Activated CD4-positive, alpha-beta T cell treated with anti-CD3 and anti-CD28 coated beads for 36 hours (primary cell): ENCODE measurements at regions of chr1 and their contacts with region 1.

Region 1: GRCh38 chr1:84996846-84997666 is at the start of gene MCOLN2:
- DNase-seq: peak; percentile 75
- ATAC-seq: peak; percentile 54
- H3K4me3 Mint-ChIP-seq: peak within 1 kb of the TSS; percentile 80
- H3K27ac Mint-ChIP-seq: peak within 1 kb of the TSS; percentile 81
- H3K4me1 Mint-ChIP-seq: peaks cover 45% of the 10 kb centered on the region
- H3K27me3 Mint-ChIP-seq: peaks cover 22% of the 10 kb centered on the region
- total RNA-seq, gene MCOLN2: 32.9 to 43.5 TPM

Region 2: GRCh38 chr1:84959294-84959693 is 37.8 kb before region 1 on chr1:
- CTCF ChIA-PET with region 1: interaction called, 7 read pairs
- POLR2A ChIA-PET with region 1: interaction called, 34 read pairs
- intact Hi-C with region 1: loop called (anchors 1 kb)
- DNase-seq: peak; percentile 77
- ATAC-seq: peak; percentile 97
- H3K4me3 Mint-ChIP-seq: peak overlapping the region; percentile 7
- H3K27ac Mint-ChIP-seq: peak overlapping the region; percentile 87
- H3K4me1 Mint-ChIP-seq: peaks cover 33% of the 10 kb centered on the region
- H3K27me3 Mint-ChIP-seq: peaks cover 2% of the 10 kb centered on the region

Region 3: GRCh38 chr1:84973498-84974334 is 23.3 kb before region 1 on chr1:
- CTCF ChIA-PET with region 1: interaction called, 3 read pairs
- POLR2A ChIA-PET with region 1: interaction called, 16 read pairs
- intact Hi-C with region 1: loop called (anchors 1 kb)
- DNase-seq: peak; percentile 41
- ATAC-seq: no peak
- H3K4me3 Mint-ChIP-seq: no peak overlapping the region
- H3K27ac Mint-ChIP-seq: peak overlapping the region; percentile 35
- H3K4me1 Mint-ChIP-seq: peaks cover 60% of the 10 kb centered on the region
- H3K27me3 Mint-ChIP-seq: no peaks in the 10 kb centered on the region

Region 4: DNA sequence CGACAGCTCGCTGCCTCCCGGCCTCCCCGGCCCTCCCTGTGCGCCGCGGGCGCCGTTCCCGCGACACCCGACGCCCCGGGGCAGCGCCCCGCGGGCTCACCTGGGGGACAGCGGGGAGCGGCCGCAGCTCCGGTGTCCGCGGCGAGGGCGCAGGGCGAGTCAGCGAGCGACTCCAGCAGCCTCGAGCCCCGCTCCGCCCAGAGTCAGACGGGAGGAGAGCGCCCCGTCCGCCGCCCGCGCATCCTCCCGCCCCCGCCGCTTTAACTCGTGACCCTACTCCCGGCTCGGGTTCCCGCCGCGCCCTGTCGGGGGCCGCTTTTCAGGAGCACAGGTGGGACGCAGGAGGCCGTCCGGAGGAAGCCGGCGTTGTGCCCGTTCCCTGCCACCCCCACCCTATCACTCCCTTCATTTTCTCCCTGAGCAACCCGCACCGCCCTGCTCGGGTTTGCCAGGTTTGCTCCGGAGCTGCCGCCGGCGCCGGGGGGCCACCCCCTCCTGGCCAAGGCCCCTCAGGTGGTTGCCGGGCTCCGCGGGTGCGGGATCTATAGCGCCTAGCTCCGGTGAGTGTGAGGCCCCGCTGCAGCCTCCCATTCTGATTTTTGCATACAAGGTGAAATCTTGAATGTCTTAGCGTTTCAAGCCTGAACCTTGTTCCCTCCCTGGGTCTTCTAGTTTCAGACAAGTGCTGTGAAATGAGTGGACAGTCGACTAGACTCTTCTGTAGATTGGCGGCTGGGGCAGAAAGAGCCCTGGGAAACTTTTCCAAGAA is 51.4 kb after region 1 on chr1 and contains the start of gene MCOLN3:
- CTCF ChIA-PET with region 1: no interaction called
- POLR2A ChIA-PET with region 1: interaction called, 3 read pairs
- intact Hi-C with region 1: loop called (anchors 2 kb)
- DNase-seq: peak; percentile 62
- ATAC-seq: peak; percentile 60
- H3K4me3 Mint-ChIP-seq: peak within 1 kb of the TSS; percentile 62
- H3K27ac Mint-ChIP-seq: no peak within 1 kb of the TSS
- H3K4me1 Mint-ChIP-seq: peaks cover 21% of the 10 kb centered on the region
- H3K27me3 Mint-ChIP-seq: peaks cover 48% of the 10 kb centered on the region
- total RNA-seq, gene MCOLN3: 0.16 to 0.23 TPM

Region 5: DNA sequence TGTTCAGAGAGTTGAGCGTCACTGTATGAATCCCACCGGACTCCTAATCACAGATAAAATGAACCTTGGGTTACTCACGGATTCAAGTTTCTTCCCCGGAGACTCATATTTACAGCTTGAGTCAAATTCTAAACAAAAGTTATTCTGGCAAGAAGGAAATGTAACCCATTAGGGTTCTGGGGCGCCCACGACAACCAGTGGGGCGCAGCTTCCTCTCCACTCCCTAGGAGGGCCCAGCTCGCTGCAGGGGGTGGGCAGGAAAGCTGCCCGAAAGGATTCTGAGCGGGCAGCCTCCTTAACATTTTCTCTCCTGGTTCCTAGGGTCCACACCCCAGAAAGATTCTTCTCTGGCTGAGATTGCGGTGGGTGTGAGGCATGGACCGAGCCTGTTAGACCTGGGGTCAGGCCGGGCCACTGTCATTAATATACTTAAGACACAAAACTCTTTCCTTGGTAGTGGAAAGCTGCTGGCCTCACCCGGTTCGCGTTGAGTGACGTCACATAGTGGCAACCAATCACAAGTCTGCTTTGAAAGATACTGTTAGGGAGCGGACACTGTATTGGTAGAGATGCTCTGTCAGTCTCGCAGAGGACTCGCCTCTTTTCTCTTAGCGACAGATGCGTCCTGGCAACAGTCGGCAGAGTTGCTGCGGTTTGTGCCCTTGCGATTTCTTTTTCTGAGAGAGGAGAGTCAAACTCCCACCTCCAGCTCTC is 64.8 kb after region 1 on chr1:
- CTCF ChIA-PET with region 1: no interaction called
- POLR2A ChIA-PET with region 1: no interaction called
- intact Hi-C with region 1: loop called in 1 of 2 experiments (anchors 2 kb)
- DNase-seq: peak; percentile 91
- ATAC-seq: peak; percentile 100
- H3K4me3 Mint-ChIP-seq: peak overlapping the region; percentile 74
- H3K27ac Mint-ChIP-seq: peak overlapping the region; percentile 66
- H3K4me1 Mint-ChIP-seq: peaks cover 13% of the 10 kb centered on the region
- H3K27me3 Mint-ChIP-seq: peaks cover 12% of the 10 kb centered on the region

Region 6: GRCh38 chr1:85200870-85201339 is 203.8 kb after region 1 on chr1 and contains the start of gene SYDE2:
- CTCF ChIA-PET with region 1: interaction called, 3 read pairs
- POLR2A ChIA-PET with region 1: no interaction called
- intact Hi-C with region 1: loop called in 1 of 2 experiments (anchors 2 kb)
- DNase-seq: peak; percentile 79
- ATAC-seq: peak; percentile 76
- H3K4me3 Mint-ChIP-seq: peak within 1 kb of the TSS; percentile 90
- H3K27ac Mint-ChIP-seq: peak within 1 kb of the TSS; percentile 88
- H3K4me1 Mint-ChIP-seq: peaks cover 25% of the 10 kb centered on the region
- H3K27me3 Mint-ChIP-seq: peaks cover 12% of the 10 kb centered on the region
- total RNA-seq, gene SYDE2: 2.9 to 3.3 TPM